Transverse colon (tissue), 4 donors: ENCODE measurements at regions of chr5 and their contacts with region 1.

Region 1: GRCh38 chr5:32329308-32329834 is 16.6 kb upstream of the MTMR12 start:
- DNase-seq: peak; percentile 75
- H3K4me3 ChIP-seq: no peak overlapping the region
- H3K27ac ChIP-seq: peak overlapping the region in 3 of 4 donors; percentile 9 to 74 (median 71)
- H3K4me1 ChIP-seq: peaks cover 8 to 30% (median 22%) of the 10 kb centered on the region in 4 donors
- H3K27me3 ChIP-seq: no peaks in the 10 kb centered on the region
- CTCF ChIP-seq: peak; percentile 59 to 64 (median 60)
- EP300 ChIP-seq: no peak
- POLR2A ChIP-seq: no peak

Region 2: DNA sequence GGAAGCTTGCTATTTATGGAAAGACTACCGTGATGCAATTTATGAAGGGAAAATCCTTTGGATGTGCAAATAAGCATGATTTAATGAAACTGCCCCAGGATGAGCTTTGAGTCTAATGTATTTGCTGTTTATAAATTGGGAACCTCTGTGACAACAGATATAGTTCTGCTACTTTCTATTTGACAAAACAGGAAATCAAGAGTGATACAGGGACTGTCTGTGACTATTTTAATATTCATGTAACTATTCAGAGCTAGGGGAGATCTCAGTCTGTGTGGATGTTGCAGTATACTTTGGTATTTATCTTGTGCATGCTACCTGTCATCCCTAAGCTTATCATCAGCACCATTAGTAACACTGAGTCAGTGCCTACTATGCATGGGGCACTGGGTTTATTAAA is 558.4 kb before region 1 on chr5:
- in situ Hi-C with region 1: no loop called
- intact Hi-C with region 1: no loop called
- DNase-seq: no peak
- H3K4me3 ChIP-seq: no peak overlapping the region
- H3K27ac ChIP-seq: no peak overlapping the region
- H3K4me1 ChIP-seq: no peaks in the 10 kb centered on the region
- H3K27me3 ChIP-seq: no peaks in the 10 kb centered on the region
- CTCF ChIP-seq: no peak
- EP300 ChIP-seq: no peak
- POLR2A ChIP-seq: no peak

Region 3: DNA sequence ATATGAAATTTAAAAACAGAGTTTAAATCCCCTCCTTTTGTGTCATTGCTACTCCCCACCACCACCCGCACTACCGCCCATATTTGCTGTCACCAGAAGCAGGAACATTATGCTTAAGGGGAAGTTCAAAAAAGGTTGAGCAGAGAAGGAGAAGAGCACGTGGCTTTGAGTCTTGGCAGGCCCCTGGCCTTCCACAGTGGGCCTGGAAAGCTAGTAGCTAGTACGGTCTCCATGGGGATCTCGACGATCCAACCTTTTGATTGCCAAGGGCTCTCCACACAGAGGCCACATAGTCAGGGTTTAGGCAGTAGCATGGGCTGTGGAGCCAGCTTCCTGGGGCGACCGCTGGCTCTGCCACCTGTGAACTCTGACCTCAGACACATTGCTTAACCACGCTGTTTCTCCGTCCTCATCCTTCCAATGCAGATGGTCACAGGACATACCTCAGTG is 245.4 kb before region 1 on chr5:
- in situ Hi-C with region 1: no loop called
- intact Hi-C with region 1: no loop called
- DNase-seq: no peak
- H3K4me3 ChIP-seq: no peak overlapping the region
- H3K27ac ChIP-seq: no peak overlapping the region
- H3K4me1 ChIP-seq: no peaks in the 10 kb centered on the region
- H3K27me3 ChIP-seq: no peaks in the 10 kb centered on the region
- CTCF ChIP-seq: no peak
- EP300 ChIP-seq: no peak
- POLR2A ChIP-seq: no peak

Region 4: DNA sequence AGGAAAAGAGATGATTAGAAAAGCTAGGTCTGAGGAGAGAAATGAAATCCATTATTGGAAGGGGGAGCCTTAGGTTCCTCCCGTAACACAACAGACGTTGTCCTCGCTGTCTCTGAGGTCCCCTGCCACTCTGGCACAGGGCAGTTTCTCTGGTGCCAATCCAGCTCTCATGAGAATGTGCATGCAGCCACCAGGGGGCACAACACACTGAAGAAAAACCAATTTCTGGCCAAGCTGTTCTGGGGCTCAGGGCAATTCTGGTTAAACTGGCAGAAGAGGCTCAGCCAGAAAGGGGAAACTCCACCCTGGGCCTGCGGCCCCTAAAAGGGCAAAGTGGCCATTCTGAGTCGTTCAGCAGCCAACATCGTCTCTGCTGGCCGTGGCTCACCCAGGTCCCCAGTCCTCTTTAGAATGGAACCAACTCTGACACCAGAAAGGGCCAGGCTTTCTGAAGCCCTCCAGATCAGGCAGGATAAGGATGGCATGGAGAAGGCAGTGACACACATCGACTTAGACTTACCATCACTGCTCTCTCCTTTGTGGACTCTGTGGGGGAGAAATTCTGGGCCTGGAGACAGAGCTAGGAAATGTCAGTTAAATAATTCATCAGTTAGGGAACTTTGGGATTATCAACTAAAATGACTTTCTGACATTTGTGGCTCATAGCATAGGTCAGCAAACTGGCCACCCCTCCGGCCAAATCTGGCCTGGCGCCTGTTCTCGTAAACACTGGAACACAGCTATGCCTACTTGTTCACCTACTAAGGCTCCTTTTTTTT is 96.7 kb before region 1 on chr5:
- in situ Hi-C with region 1: loop called in 2 of 4 experiments (anchors 10 to 25 kb)
- intact Hi-C with region 1: no loop called
- DNase-seq: peak; percentile 86
- H3K4me3 ChIP-seq: no peak overlapping the region
- H3K27ac ChIP-seq: peak overlapping the region; percentile 42 to 70 (median 53)
- H3K4me1 ChIP-seq: peaks cover 4 to 32% (median 18%) of the 10 kb centered on the region in 4 donors
- H3K27me3 ChIP-seq: no peaks in the 10 kb centered on the region
- CTCF ChIP-seq: peak; percentile 77 to 92 (median 84)
- EP300 ChIP-seq: no peak
- POLR2A ChIP-seq: no peak